ENCODE measurements at regions of chr3 and their contacts with region 1.

Region 1: DNA sequence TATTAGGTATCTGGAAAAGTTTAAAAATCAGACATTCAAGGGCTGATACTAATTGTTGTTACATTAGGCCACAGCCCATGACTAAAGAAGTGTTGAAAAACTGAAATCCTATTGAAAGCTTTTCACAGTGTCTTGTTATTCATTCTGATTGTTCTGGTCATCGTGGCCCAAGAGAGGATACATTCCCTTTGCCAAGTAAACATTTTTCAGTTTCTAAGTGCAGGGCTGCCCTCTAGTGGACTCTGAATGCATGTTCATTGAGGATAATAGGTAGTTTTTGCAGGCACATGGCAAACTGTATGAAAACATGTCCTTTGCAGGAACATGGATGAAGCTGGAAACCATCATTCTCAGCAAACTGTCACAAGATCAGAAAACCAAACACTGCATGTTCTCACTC is 181.1 kb downstream of the MYRIP start:
- DNase-seq: peak; percentile 48
- H3K4me3 ChIP-seq: no peak overlapping the region
- H3K27ac ChIP-seq: no peak overlapping the region
- H3K4me1 ChIP-seq: no peaks in the 10 kb centered on the region
- H3K27me3 ChIP-seq: no peaks in the 10 kb centered on the region
- CTCF ChIP-seq: peak; percentile 53

Region 2: DNA sequence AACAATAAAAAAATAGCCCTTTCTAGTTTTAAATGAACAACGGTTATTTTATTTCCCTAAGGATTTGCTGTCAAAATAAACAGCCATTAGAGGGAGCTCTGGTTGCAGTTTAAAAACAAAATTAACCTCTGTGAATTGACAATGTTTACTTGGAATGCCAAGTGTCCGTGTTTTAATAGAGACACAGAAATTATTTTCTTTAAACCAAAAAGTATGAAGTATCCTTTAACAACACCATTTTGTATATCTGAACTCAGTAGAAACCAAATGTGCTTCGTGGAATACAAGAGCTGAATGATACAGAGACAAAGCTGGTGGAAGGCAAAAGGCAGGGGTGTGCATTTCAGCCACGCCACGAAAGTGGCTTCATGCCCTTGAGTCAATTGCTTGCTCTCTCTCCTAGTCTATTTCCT is 448.6 kb before region 1 on chr3:
- CTCF ChIA-PET with region 1: no interaction called
- POLR2A ChIA-PET with region 1: no interaction called
- intact Hi-C with region 1: loop called (anchors 10 kb)
- DNase-seq: peak; percentile 19
- H3K4me3 ChIP-seq: no peak overlapping the region
- H3K27ac ChIP-seq: no peak overlapping the region
- H3K4me1 ChIP-seq: no peaks in the 10 kb centered on the region
- H3K27me3 ChIP-seq: no peaks in the 10 kb centered on the region
- CTCF ChIP-seq: peak; percentile 51

Region 3: DNA sequence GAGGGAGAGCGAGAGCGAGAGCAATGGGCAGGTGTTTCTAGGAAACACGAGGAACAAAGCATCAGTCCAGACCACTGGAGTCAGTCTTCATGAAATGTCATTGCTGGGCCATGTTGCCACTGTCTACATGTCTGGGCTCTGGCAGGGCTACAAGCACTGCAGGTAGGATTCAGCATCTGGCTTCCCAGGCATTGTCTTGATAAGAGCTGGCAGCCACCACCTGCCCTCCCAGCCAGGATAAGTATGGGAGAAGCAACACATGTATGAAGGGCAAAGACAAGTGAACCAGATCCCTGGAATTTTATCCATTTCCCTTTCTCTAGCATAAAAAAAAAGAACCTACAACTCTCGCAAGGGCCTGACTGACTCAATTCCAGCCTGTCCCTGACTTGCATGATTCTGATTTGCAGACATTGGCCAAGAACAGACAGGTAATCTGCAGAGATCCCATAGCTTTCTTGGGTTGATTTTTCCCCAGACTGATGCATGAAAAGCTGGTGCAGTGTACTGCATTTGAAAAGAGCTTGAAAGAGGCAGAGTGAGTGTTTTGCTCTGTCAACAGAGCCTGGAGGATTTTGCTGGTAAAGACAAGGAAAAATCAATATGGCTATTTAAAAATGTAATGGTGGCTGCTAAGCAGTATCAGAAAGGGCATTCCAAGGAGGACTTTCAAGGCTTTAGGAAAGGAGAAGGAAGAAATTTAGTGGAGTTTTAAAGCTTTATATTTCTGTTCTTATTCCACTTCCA is 338.4 kb before region 1 on chr3:
- CTCF ChIA-PET with region 1: no interaction called
- POLR2A ChIA-PET with region 1: no interaction called
- intact Hi-C with region 1: no loop called
- DNase-seq: no peak
- H3K4me3 ChIP-seq: no peak overlapping the region
- H3K27ac ChIP-seq: no peak overlapping the region
- H3K4me1 ChIP-seq: no peaks in the 10 kb centered on the region
- H3K27me3 ChIP-seq: no peaks in the 10 kb centered on the region
- CTCF ChIP-seq: no peak

Region 4: GRCh38 chr3:39707314-39707909 is 283.1 kb before region 1 on chr3:
- CTCF ChIA-PET with region 1: no interaction called
- POLR2A ChIA-PET with region 1: no interaction called
- intact Hi-C with region 1: loop called (anchors 5 kb)
- DNase-seq: peak; percentile 33
- H3K4me3 ChIP-seq: no peak overlapping the region
- H3K27ac ChIP-seq: no peak overlapping the region
- H3K4me1 ChIP-seq: no peaks in the 10 kb centered on the region
- H3K27me3 ChIP-seq: no peaks in the 10 kb centered on the region
- CTCF ChIP-seq: peak; percentile 61

Region 5: DNA sequence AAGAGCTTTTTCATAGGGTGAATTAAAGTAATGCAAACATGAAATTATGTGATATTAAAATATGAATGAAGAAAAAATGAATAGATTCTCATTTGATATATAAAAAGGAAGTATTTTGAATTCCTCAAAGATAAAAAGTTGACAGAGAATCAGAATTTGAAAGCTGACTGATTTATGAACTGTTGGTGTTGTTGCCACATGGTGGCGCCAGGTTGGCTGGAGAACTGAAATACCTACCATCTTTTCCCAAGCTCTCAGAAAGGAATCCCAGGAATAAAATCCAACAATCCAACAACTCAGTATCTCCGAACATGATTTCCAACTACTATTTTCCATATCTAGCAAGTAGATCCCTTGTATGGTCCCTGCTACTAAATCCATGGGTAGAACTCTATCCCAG is 178.0 kb before region 1 on chr3:
- CTCF ChIA-PET with region 1: no interaction called
- POLR2A ChIA-PET with region 1: no interaction called
- intact Hi-C with region 1: loop called (anchors 5 kb)
- DNase-seq: peak; percentile 2
- H3K4me3 ChIP-seq: no peak overlapping the region
- H3K27ac ChIP-seq: no peak overlapping the region
- H3K4me1 ChIP-seq: no peaks in the 10 kb centered on the region
- H3K27me3 ChIP-seq: peaks cover 38% of the 10 kb centered on the region
- CTCF ChIP-seq: peak; percentile 50

Region 6: DNA sequence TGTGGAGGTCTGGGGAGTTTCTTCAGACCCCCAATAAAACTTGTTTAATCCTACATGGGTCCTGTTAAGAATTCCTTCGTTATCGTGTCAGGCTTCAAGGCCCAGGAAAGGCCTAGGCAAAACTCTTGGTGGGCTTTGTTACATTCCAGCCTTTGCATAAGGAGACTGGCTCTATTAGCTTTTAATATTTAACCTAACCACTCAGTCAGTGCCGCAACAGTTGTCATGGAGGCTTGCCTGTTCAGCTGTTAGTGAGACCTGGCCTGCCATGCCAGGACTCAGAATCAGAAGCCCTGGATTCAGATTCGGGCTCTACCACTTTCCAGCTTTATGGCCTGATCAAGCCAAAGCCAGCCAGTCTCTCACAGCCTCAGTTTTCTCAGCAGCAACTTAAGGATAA is 338.5 kb after region 1 on chr3:
- CTCF ChIA-PET with region 1: no interaction called
- POLR2A ChIA-PET with region 1: no interaction called
- intact Hi-C with region 1: no loop called
- DNase-seq: no peak
- H3K4me3 ChIP-seq: no peak overlapping the region
- H3K27ac ChIP-seq: no peak overlapping the region
- H3K4me1 ChIP-seq: no peaks in the 10 kb centered on the region
- H3K27me3 ChIP-seq: no peaks in the 10 kb centered on the region
- CTCF ChIP-seq: no peak